CD8-positive, alpha-beta T cell (primary cell): ENCODE measurements at regions of chr11 and their contacts with region 1.

Region 1: GRCh38 chr11:129895126-129896041 is at the start of gene NFRKB:
- DNase-seq: peak; percentile 76 to 94 (median 86)
- ATAC-seq: peak; percentile 96
- H3K4me3 ChIP-seq: peak within 1 kb of the TSS; percentile 72 to 90
- H3K4me3 Mint-ChIP-seq: peak within 1 kb of the TSS; percentile 92
- H3K27ac ChIP-seq: peak within 1 kb of the TSS; percentile 45 to 53
- H3K27ac Mint-ChIP-seq: peak within 1 kb of the TSS; percentile 90
- H3K4me1 ChIP-seq: peaks cover 19% of the 10 kb centered on the region
- H3K4me1 Mint-ChIP-seq: peaks cover 43% of the 10 kb centered on the region
- H3K27me3 ChIP-seq: no peaks in the 10 kb centered on the region
- H3K27me3 Mint-ChIP-seq: no peaks in the 10 kb centered on the region
- CTCF ChIP-seq: no peak
- total RNA-seq, gene NFRKB: 38.8 to 39.4 TPM

Region 2: DNA sequence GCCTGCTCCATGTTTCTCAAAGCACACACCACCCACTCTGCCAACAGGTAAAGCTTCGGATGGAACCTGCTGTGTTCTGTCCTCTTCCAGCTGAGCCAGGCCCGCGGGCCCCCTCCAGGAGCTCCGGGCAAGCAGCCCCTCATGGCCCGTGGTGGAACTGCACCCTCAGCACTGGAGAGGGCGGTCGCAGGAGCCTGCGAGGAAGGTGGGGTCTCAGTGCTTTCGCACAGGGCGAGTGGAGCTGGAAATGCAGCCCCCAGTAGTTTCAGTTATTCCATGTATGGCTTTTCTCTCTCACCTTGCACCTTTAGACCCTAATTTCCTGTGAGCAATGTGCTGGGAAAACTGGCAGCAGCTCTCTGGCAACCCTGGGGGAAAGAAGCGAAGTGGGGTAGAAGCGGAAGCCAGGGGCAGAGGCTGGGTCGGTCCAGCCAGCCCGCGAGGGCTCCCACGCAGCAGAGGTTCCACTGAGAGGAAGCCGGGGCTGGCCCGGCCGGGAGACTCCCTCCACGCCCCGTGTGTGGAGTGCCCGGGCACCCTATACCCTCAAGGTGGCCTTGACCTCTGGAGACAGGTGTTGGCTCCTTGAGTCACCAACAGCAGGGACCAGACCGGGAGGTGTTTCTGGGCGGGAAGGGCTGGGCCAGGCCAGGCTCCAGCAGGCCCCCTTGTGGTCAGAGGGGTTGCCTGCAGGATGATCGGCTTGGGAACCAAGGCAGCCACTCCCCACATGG is 199.6 kb before region 1 on chr11:
- CTCF ChIA-PET with region 1: no interaction called
- POLR2A ChIA-PET with region 1: no interaction called
- intact Hi-C with region 1: loop called in 1 of 2 experiments (anchors 1 kb)
- DNase-seq: peak; percentile 34 to 80 (median 70)
- ATAC-seq: peak; percentile 95
- H3K4me3 ChIP-seq: peak overlapping the region; percentile 62 to 76
- H3K4me3 Mint-ChIP-seq: peak overlapping the region; percentile 88
- H3K27ac ChIP-seq: peak overlapping the region in 1 of 2 experiments; percentile 1
- H3K27ac Mint-ChIP-seq: peak overlapping the region; percentile 77
- H3K4me1 ChIP-seq: peaks cover 5% of the 10 kb centered on the region
- H3K4me1 Mint-ChIP-seq: peaks cover 8% of the 10 kb centered on the region
- H3K27me3 ChIP-seq: no peaks in the 10 kb centered on the region
- H3K27me3 Mint-ChIP-seq: peaks cover 23% of the 10 kb centered on the region
- CTCF ChIP-seq: peak; percentile 38

Region 3: GRCh38 chr11:129917231-129917630 is 21.8 kb after region 1 on chr11:
- CTCF ChIA-PET with region 1: no interaction called
- POLR2A ChIA-PET with region 1: interaction called, 3 read pairs
- intact Hi-C with region 1: loop called (anchors 1 to 2 kb)
- DNase-seq: no peak
- ATAC-seq: no peak
- H3K4me3 ChIP-seq: no peak overlapping the region
- H3K4me3 Mint-ChIP-seq: no peak overlapping the region
- H3K27ac ChIP-seq: no peak overlapping the region
- H3K27ac Mint-ChIP-seq: no peak overlapping the region
- H3K4me1 ChIP-seq: no peaks in the 10 kb centered on the region
- H3K4me1 Mint-ChIP-seq: peaks cover 2% of the 10 kb centered on the region
- H3K27me3 ChIP-seq: no peaks in the 10 kb centered on the region
- H3K27me3 Mint-ChIP-seq: no peaks in the 10 kb centered on the region
- CTCF ChIP-seq: no peak

Region 4: DNA sequence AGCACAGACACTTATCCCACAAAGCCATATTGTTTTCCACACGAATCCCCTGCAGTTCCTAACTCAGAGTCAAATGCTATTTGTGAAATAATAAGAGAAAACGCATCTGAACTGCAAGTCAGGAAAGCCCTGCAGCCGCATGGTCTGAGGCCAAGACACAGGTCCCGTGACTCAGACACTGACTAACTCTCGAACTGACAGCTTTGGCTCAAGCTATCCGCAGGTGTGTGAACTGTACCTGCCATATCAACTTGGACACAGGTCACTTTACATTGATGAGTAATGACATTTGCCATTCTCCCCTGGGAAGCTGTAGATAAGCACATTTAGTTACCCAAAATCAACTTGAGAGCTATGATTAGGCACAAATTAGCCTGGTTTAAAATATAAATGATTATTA is 34.9 kb after region 1 on chr11:
- CTCF ChIA-PET with region 1: no interaction called
- POLR2A ChIA-PET with region 1: no interaction called
- intact Hi-C with region 1: no loop called
- DNase-seq: peak in 1 of 9 experiments; percentile 11
- ATAC-seq: no peak
- H3K4me3 ChIP-seq: no peak overlapping the region
- H3K4me3 Mint-ChIP-seq: no peak overlapping the region
- H3K27ac ChIP-seq: no peak overlapping the region
- H3K27ac Mint-ChIP-seq: no peak overlapping the region
- H3K4me1 ChIP-seq: no peaks in the 10 kb centered on the region
- H3K4me1 Mint-ChIP-seq: no peaks in the 10 kb centered on the region
- H3K27me3 ChIP-seq: no peaks in the 10 kb centered on the region
- H3K27me3 Mint-ChIP-seq: no peaks in the 10 kb centered on the region
- CTCF ChIP-seq: no peak

Region 5: DNA sequence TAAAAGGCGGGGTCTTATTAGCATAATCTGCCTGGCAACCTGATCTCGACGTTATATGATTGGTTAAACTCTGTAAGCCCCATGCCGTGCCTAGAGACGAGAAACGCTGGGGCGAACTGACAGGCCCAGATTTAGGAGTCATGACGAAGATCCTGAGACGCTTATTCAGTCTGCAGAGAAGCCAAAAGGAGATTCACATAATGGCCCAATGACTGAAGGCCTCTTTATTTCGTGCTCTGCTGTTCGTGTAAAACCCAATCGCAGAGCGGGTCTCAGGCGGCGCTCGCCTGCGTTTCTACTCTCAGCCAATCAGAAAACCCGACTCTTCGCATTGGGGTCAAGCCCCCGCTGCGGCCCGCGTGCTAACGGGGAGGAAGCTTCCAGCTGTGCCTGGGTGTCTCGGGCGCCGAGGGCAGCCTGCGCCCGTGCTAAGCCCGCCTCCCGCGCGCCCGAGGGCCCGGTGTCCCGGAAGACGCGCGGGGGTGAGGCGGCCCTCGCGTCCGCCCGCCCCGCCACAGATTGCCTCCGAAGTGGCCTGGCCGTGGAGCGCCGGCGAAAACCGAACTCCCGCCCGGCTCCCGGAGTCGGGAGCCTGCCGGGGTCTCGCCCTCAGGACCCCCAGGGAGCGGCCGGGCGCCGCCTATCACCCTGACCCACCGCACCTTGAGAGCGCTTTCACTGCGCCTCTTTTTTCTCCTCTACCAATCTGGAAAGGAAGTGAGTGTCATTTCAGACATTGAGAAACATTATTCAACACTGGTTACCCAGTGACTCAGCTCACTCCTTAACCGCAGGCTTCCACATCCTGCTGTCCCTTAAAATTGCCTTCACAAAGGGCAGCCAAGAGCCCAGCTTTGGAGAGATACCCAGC is 107.7 kb after region 1 on chr11:
- CTCF ChIA-PET with region 1: interaction called, 3 read pairs
- POLR2A ChIA-PET with region 1: interaction called, 18 read pairs
- intact Hi-C with region 1: loop called (anchors 1 to 2 kb)
- DNase-seq: peak; percentile 82 to 96 (median 89)
- ATAC-seq: peak; percentile 77
- H3K4me3 ChIP-seq: peak overlapping the region; percentile 69 to 71
- H3K4me3 Mint-ChIP-seq: peak overlapping the region; percentile 99
- H3K27ac ChIP-seq: peak overlapping the region; percentile 99 to 100
- H3K27ac Mint-ChIP-seq: peak overlapping the region; percentile 100
- H3K4me1 ChIP-seq: peaks cover 24% of the 10 kb centered on the region
- H3K4me1 Mint-ChIP-seq: peaks cover 37% of the 10 kb centered on the region
- H3K27me3 ChIP-seq: no peaks in the 10 kb centered on the region
- H3K27me3 Mint-ChIP-seq: no peaks in the 10 kb centered on the region
- CTCF ChIP-seq: no peak

Region 6: GRCh38 chr11:130314750-130315285 is 419.4 kb after region 1 on chr11 and contains the start of gene ZBTB44:
- CTCF ChIA-PET with region 1: no interaction called
- POLR2A ChIA-PET with region 1: no interaction called
- intact Hi-C with region 1: loop called (anchors 1 kb)
- DNase-seq: peak; percentile 84 to 95 (median 91)
- ATAC-seq: peak; percentile 82
- H3K4me3 ChIP-seq: peak within 1 kb of the TSS; percentile 79 to 87
- H3K4me3 Mint-ChIP-seq: peak within 1 kb of the TSS; percentile 90
- H3K27ac ChIP-seq: peak within 1 kb of the TSS; percentile 76 to 84
- H3K27ac Mint-ChIP-seq: peak within 1 kb of the TSS; percentile 99
- H3K4me1 ChIP-seq: peaks cover 31% of the 10 kb centered on the region
- H3K4me1 Mint-ChIP-seq: peaks cover 41% of the 10 kb centered on the region
- H3K27me3 ChIP-seq: no peaks in the 10 kb centered on the region
- H3K27me3 Mint-ChIP-seq: no peaks in the 10 kb centered on the region
- CTCF ChIP-seq: no peak
- total RNA-seq, gene ZBTB44: 31.8 to 35.0 TPM